Activated CD8-positive, alpha-beta T cell treated with anti-CD3 and anti-CD28 coated beads for 36 hours (primary cell): ENCODE measurements at regions of chr5 and their contacts with region 1.

Region 1: DNA sequence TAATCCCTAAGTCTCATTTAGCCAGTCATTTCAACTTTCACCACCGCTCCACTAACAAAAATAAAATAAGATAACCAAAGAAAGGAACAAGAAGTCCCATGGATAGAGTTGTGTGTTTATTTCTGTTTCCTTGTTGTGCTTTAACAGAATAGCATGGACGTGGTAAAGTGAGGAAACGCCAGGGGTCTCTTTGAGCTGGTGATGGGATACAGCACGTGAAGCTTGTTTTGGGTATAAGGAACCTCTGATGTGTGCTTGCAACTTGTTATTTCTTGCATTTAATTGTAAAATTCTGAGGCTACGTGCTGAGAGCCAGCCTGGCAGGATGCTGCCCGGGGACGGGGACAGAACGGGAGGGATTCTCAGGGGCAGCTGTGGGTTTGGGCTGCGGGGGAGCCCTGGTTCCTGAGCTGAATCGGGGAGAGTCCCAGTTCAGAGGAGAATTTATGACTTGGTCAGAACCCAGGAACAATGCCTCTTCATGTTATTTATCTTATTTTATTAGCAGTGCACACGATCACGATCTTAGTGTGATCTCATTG is 63.4 kb downstream of the ANKRD33B start:
- DNase-seq: peak; percentile 40
- ATAC-seq: peak; percentile 25
- H3K4me3 Mint-ChIP-seq: peak overlapping the region; percentile 69
- H3K27ac Mint-ChIP-seq: peak overlapping the region; percentile 83
- H3K4me1 Mint-ChIP-seq: peaks cover 48% of the 10 kb centered on the region
- H3K27me3 Mint-ChIP-seq: peaks cover 6% of the 10 kb centered on the region
- CTCF ChIP-seq: no peak

Region 2: GRCh38 chr5:10283927-10284635 is 343.1 kb before region 1 on chr5:
- CTCF ChIA-PET with region 1: interaction called, 7 read pairs
- POLR2A ChIA-PET with region 1: no interaction called
- intact Hi-C with region 1: loop called (anchors 10 kb)
- DNase-seq: peak; percentile 89
- ATAC-seq: peak; percentile 99
- H3K4me3 Mint-ChIP-seq: no peak overlapping the region
- H3K27ac Mint-ChIP-seq: no peak overlapping the region
- H3K4me1 Mint-ChIP-seq: peaks cover 13% of the 10 kb centered on the region
- H3K27me3 Mint-ChIP-seq: peaks cover 1% of the 10 kb centered on the region
- CTCF ChIP-seq: peak; percentile 94

Region 3: DNA sequence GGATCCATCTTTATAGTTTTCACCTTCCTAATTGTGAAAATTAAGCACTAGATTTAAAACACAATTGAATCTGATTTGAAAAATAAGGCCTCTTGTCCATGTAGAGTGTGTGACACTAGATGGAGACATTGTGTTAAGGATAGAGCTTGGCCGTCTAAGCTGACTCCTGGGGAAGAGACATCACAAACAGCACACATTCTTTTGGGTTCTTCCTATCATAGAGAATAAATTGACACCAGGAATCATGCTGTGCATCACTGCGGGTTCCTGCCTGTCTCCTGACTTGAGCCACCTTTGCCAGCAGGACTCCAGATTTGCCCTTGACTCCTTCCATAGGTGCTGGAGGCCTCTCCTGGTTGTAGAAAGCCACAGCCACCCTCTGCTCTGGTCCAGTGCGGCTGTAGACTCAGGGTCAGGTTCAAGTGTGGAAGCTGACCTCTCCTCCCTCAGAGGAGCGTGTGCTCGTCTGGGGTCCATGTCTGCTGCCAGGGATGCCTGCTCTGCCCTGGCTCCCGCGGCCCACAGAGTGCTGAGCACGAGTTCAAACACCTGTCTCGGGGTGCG is 174.4 kb before region 1 on chr5:
- CTCF ChIA-PET with region 1: interaction called, 89 read pairs
- POLR2A ChIA-PET with region 1: interaction called, 3 read pairs
- intact Hi-C with region 1: loop called (anchors 5 kb)
- DNase-seq: no peak
- ATAC-seq: peak; percentile 73
- H3K4me3 Mint-ChIP-seq: no peak overlapping the region
- H3K27ac Mint-ChIP-seq: no peak overlapping the region
- H3K4me1 Mint-ChIP-seq: no peaks in the 10 kb centered on the region
- H3K27me3 Mint-ChIP-seq: no peaks in the 10 kb centered on the region
- CTCF ChIP-seq: peak; percentile 60

Region 4: DNA sequence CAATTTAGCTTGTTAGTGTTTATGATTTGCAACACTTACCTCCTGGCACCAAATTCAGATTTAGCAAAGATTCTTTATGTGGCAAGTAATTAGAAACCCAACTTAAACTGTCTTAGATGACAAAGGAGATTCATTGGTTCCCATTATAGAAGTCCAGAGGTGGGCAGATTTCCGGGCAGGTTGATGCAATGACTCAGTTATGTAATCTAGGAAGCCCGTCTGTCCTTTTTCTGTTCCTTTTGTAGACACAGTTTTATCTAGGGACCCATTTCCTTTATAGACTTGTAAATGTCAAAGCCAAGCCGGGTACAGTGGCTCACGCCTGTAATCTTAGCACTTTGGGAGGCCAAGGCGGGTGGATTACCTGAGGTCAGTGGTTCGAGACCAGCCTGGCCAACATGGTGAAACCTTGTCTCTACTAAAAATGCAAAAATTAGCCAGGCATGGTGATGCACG is 83.6 kb before region 1 on chr5:
- CTCF ChIA-PET with region 1: interaction called, 13 read pairs
- POLR2A ChIA-PET with region 1: no interaction called
- intact Hi-C with region 1: no loop called
- DNase-seq: no peak
- ATAC-seq: no peak
- H3K4me3 Mint-ChIP-seq: no peak overlapping the region
- H3K27ac Mint-ChIP-seq: no peak overlapping the region
- H3K4me1 Mint-ChIP-seq: peaks cover 3% of the 10 kb centered on the region
- H3K27me3 Mint-ChIP-seq: peaks cover 17% of the 10 kb centered on the region
- CTCF ChIP-seq: no peak

Region 5: GRCh38 chr5:10564838-10565784 is 62.1 kb before region 1 on chr5:
- CTCF ChIA-PET with region 1: interaction called, 22 read pairs
- POLR2A ChIA-PET with region 1: interaction called, 3 read pairs
- intact Hi-C with region 1: loop called (anchors 5 kb)
- DNase-seq: peak; percentile 36
- ATAC-seq: no peak
- H3K4me3 Mint-ChIP-seq: peak overlapping the region; percentile 91
- H3K27ac Mint-ChIP-seq: peak overlapping the region; percentile 25
- H3K4me1 Mint-ChIP-seq: peaks cover 22% of the 10 kb centered on the region
- H3K27me3 Mint-ChIP-seq: peaks cover 14% of the 10 kb centered on the region
- CTCF ChIP-seq: no peak

Region 6: GRCh38 chr5:10671041-10672008 is 44.1 kb after region 1 on chr5:
- CTCF ChIA-PET with region 1: no interaction called
- POLR2A ChIA-PET with region 1: no interaction called
- intact Hi-C with region 1: no loop called
- DNase-seq: no peak
- ATAC-seq: no peak
- H3K4me3 Mint-ChIP-seq: no peak overlapping the region
- H3K27ac Mint-ChIP-seq: no peak overlapping the region
- H3K4me1 Mint-ChIP-seq: no peaks in the 10 kb centered on the region
- H3K27me3 Mint-ChIP-seq: peaks cover 1% of the 10 kb centered on the region
- CTCF ChIP-seq: no peak

Region 7: GRCh38 chr5:10701567-10702039 is 74.4 kb after region 1 on chr5:
- CTCF ChIA-PET with region 1: interaction called, 12 read pairs
- POLR2A ChIA-PET with region 1: no interaction called
- intact Hi-C with region 1: no loop called
- DNase-seq: peak; percentile 49
- ATAC-seq: peak; percentile 38
- H3K4me3 Mint-ChIP-seq: no peak overlapping the region
- H3K27ac Mint-ChIP-seq: no peak overlapping the region
- H3K4me1 Mint-ChIP-seq: peaks cover 39% of the 10 kb centered on the region
- H3K27me3 Mint-ChIP-seq: no peaks in the 10 kb centered on the region
- CTCF ChIP-seq: peak; percentile 92

Region 8: GRCh38 chr5:10825897-10826644 is 198.8 kb after region 1 on chr5:
- CTCF ChIA-PET with region 1: no interaction called
- POLR2A ChIA-PET with region 1: no interaction called
- intact Hi-C with region 1: no loop called
- DNase-seq: no peak
- ATAC-seq: no peak
- H3K4me3 Mint-ChIP-seq: no peak overlapping the region
- H3K27ac Mint-ChIP-seq: no peak overlapping the region
- H3K4me1 Mint-ChIP-seq: no peaks in the 10 kb centered on the region
- H3K27me3 Mint-ChIP-seq: peaks cover 16% of the 10 kb centered on the region
- CTCF ChIP-seq: no peak